Activated CD4-positive, alpha-beta T cell treated with anti-CD3 and anti-CD28 coated beads for 36 hours (primary cell): ENCODE measurements at regions of chr16 and their contacts with region 1.

Region 1: GRCh38 chr16:4624015-4624826 is at the start of gene MGRN1:
- DNase-seq: peak; percentile 96
- ATAC-seq: peak; percentile 89
- H3K4me3 Mint-ChIP-seq: peak within 1 kb of the TSS; percentile 99
- H3K27ac Mint-ChIP-seq: peak within 1 kb of the TSS; percentile 100
- H3K4me1 Mint-ChIP-seq: peaks cover 38% of the 10 kb centered on the region
- H3K27me3 Mint-ChIP-seq: no peaks in the 10 kb centered on the region
- total RNA-seq, gene MGRN1: 65.0 to 75.4 TPM

Region 2: DNA sequence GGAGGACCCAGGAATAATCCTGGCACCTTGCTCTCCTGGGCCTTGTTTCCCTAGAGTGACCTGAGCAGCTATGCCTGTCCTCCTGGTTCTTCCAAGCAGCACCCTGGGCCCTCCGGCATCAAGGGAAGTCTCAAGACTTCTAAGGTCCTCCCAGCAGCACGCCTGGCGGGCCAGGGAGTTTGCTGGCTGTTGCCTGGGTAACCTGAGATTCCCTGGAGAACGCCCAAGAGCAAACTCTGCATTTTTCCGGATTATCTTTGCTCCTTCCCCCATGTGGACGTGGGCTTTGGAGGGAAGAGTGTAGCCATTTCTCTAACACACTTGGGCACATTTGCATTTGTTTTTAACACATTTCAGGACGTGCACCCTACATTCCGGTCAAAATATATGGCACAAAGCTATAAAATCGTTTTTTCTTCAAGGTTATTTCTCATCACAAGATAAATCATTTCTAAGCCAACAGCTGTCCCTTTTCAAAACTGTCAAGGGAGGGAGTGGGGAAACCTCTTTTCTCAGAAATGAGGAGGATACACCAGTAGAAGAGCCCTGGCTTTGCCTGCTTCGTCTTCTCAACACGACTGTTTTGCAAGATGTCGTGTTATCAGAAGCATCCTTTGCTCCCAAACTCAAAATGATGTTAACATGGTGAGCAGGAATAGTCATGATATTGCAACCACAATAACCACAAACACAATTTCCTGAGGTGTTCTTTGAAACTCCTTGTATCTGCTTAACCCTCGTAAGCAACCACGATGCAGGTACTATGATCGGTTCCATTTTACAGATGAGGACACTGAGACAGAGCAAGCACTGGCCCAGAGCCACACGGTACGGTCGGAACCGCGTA is 624.5 kb before region 1 on chr16:
- CTCF ChIA-PET with region 1: no interaction called
- POLR2A ChIA-PET with region 1: no interaction called
- intact Hi-C with region 1: no loop called
- DNase-seq: no peak
- ATAC-seq: peak; percentile 36
- H3K4me3 Mint-ChIP-seq: no peak overlapping the region
- H3K27ac Mint-ChIP-seq: no peak overlapping the region
- H3K4me1 Mint-ChIP-seq: peaks cover 13% of the 10 kb centered on the region
- H3K27me3 Mint-ChIP-seq: no peaks in the 10 kb centered on the region

Region 3: GRCh38 chr16:4392382-4393239 is 231.6 kb before region 1 on chr16:
- CTCF ChIA-PET with region 1: no interaction called
- POLR2A ChIA-PET with region 1: no interaction called
- intact Hi-C with region 1: no loop called
- DNase-seq: no peak
- ATAC-seq: no peak
- H3K4me3 Mint-ChIP-seq: no peak overlapping the region
- H3K27ac Mint-ChIP-seq: no peak overlapping the region
- H3K4me1 Mint-ChIP-seq: no peaks in the 10 kb centered on the region
- H3K27me3 Mint-ChIP-seq: no peaks in the 10 kb centered on the region

Region 4: GRCh38 chr16:4506450-4506849 is 117.8 kb before region 1 on chr16:
- CTCF ChIA-PET with region 1: interaction called, 8 read pairs
- POLR2A ChIA-PET with region 1: interaction called, 3 read pairs
- intact Hi-C with region 1: loop called in 1 of 2 experiments (anchors 1 kb)
- DNase-seq: peak; percentile 75
- ATAC-seq: peak; percentile 72
- H3K4me3 Mint-ChIP-seq: no peak overlapping the region
- H3K27ac Mint-ChIP-seq: peak overlapping the region; percentile 81
- H3K4me1 Mint-ChIP-seq: peaks cover 48% of the 10 kb centered on the region
- H3K27me3 Mint-ChIP-seq: no peaks in the 10 kb centered on the region

Region 5: DNA sequence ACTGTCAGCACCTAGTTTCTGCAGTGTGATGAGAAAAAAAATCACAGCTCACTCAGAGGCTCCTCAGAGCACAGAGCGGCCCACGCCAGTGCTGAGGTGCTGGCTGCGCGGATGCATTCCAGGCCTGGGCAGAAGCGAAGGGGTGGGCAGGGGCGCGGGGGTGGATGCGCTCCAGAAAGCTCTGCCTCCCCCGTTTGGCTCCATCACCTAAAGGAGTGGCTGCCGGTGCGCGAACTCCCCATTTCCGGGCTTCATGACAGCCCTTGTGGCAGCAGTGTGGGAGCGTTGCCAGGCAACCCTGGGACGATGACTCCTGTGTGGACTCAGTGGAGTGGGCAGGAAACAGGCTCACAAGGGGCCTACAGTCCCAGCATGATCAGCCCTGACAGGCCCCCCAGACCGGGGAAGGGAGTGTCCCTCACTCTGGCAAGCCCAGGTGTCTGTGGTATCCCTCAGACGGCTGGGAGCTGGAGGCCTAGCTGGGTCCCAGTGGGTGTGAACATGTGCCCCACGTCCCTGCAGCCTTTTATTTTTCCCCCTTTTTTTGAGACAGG is 36.3 kb after region 1 on chr16:
- CTCF ChIA-PET with region 1: interaction called, 4 read pairs
- POLR2A ChIA-PET with region 1: interaction called, 3 read pairs
- intact Hi-C with region 1: loop called (anchors 1 to 5 kb)
- DNase-seq: peak; percentile 94
- ATAC-seq: peak; percentile 82
- H3K4me3 Mint-ChIP-seq: no peak overlapping the region
- H3K27ac Mint-ChIP-seq: peak overlapping the region; percentile 68
- H3K4me1 Mint-ChIP-seq: peaks cover 70% of the 10 kb centered on the region
- H3K27me3 Mint-ChIP-seq: no peaks in the 10 kb centered on the region

Region 6: DNA sequence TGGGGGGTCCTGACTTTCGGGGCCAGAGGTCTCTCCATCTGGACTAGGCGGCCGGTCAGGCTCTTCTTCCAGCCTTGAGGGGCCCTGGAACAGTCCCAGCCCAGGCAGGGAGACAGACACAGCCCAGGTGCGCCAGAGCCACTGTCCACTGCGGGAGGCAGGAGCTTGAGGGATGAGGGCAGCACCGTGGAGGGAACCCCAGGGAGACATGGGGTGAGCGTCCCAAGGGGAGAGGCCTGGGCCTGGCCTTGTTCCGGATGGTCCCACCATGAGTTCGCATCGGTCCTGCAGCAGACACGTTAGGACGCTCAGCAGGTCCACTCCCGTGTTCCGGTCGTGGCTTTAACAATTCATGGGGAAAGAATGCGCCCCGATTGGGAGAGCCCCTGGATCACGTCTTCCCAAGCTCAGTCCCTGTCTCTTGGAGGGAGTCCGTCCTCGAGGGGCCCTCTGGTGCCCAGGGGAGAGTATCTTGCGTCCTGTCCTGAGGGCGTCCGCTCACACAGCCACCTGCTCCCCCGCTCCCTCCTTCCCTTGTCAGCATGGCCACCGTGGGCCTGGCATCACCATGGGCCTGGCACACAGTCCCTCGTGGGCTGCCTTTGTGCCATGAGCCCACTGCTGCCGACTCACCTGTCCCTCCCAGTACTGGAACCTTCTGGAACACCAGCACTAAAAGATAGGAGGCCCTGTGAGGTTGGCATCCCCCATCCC is 62.4 kb after region 1 on chr16:
- CTCF ChIA-PET with region 1: no interaction called
- POLR2A ChIA-PET with region 1: no interaction called
- intact Hi-C with region 1: no loop called
- DNase-seq: no peak
- ATAC-seq: no peak
- H3K4me3 Mint-ChIP-seq: no peak overlapping the region
- H3K27ac Mint-ChIP-seq: no peak overlapping the region
- H3K4me1 Mint-ChIP-seq: peaks cover 4% of the 10 kb centered on the region
- H3K27me3 Mint-ChIP-seq: no peaks in the 10 kb centered on the region

Region 7: DNA sequence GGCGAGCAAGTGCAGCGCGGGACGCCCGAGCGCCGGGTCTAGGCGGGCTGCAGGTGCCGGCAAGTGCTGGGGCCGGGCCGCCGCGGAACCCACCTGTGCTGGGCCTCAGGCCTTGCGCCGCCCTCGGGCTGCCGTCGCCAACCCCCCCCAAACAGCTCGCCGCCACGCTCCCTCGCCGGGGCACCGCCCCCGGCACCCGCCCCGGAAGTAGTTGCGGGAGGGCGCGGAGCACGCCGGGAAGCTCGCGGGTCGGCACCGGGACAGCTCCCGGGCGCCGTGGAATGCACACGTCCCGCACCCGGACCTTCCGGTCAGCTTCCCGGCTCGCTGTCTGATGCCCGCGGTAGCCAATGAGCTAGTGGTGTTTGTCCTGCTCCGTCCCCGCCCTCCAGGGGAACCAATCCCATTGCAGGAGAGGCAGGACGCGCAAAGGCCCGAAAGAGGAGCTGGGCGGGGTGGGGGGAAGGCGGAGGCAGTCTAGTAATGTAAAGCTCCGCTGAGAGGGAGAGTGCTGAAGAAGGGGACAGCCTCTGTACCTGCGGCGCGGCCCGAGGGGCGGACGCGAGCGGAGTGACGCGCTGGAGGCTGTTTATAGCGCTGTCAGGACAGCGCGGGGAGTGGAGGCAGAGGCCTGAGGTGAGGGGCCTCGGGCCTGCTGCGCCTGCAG is 110.0 kb after region 1 on chr16 and contains the starts of genes ANKS3 and DNAAF8:
- CTCF ChIA-PET with region 1: no interaction called
- POLR2A ChIA-PET with region 1: interaction called, 3 read pairs
- intact Hi-C with region 1: loop called (anchors 1 to 2 kb)
- DNase-seq: peak; percentile 88
- ATAC-seq: peak; percentile 82
- H3K4me3 Mint-ChIP-seq: peak within 1 kb of the TSS; percentile 86
- H3K27ac Mint-ChIP-seq: peak within 1 kb of the TSS; percentile 58
- H3K4me1 Mint-ChIP-seq: peaks cover 13% of the 10 kb centered on the region
- H3K27me3 Mint-ChIP-seq: no peaks in the 10 kb centered on the region
- total RNA-seq, gene ANKS3: 12.1 to 14.1 TPM
- total RNA-seq, gene DNAAF8: 0.11 to 0.16 TPM

Region 8: GRCh38 chr16:4846891-4847773 is 222.9 kb after region 1 on chr16 and contains the starts of genes GLYR1 and UBN1:
- CTCF ChIA-PET with region 1: no interaction called
- POLR2A ChIA-PET with region 1: no interaction called
- intact Hi-C with region 1: loop called (anchors 2 to 10 kb)
- DNase-seq: peak; percentile 100
- ATAC-seq: peak; percentile 96
- H3K4me3 Mint-ChIP-seq: peak within 1 kb of the TSS; percentile 77
- H3K27ac Mint-ChIP-seq: peak within 1 kb of the TSS; percentile 84
- H3K4me1 Mint-ChIP-seq: peaks cover 54% of the 10 kb centered on the region
- H3K27me3 Mint-ChIP-seq: no peaks in the 10 kb centered on the region
- total RNA-seq, gene GLYR1: 76.9 to 78.4 TPM
- total RNA-seq, gene UBN1: 19.3 to 23.0 TPM

Region 9: GRCh38 chr16:4936181-4936990 is 312.2 kb after region 1 on chr16:
- CTCF ChIA-PET with region 1: no interaction called
- POLR2A ChIA-PET with region 1: no interaction called
- intact Hi-C with region 1: no loop called
- DNase-seq: peak; percentile 31
- ATAC-seq: peak; percentile 39
- H3K4me3 Mint-ChIP-seq: peak overlapping the region; percentile 44
- H3K27ac Mint-ChIP-seq: no peak overlapping the region
- H3K4me1 Mint-ChIP-seq: peaks cover 5% of the 10 kb centered on the region
- H3K27me3 Mint-ChIP-seq: peaks cover 34% of the 10 kb centered on the region